B cell (primary cell): ENCODE measurements at regions of chr3 and their contacts with region 1.

Region 1: DNA sequence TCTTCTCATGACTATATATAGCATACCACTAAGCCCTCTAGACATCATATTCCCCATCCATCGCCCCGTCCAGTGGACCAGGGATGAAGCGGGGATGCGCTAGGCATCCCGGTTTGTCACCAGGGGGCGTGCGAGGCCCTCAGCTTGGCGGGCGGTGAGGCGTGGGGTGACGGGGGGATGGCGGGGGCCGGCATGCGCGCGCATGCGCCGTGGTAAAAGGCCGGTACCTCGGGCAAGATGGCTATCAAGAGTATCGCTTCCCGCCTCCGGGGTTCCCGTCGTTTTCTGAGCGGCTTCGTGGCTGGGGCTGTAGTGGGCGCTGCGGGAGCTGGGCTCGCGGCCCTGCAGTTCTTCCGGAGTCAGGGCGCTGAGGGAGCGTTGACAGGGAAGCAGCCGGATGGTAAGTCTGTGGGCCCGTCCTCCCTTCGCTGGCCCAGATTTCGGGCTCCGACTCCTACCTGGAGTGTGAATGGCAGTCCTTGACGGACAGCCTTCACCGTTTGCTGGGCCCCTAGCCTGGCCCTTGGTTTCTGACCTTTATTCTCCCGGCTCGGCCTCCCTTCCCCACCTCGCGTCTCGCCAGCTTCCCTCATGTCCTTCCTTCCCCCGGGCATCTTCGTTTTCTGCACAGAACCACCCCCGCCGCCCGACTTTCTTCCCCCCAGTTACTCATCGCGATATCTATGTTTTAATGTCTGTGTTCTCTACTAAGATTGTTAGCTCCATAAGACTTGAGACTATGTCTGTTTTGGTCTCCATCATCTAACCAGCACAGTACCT is at the start of gene EXOG:
- DNase-seq: peak; percentile 95
- ATAC-seq: peak; percentile 96
- H3K4me3 ChIP-seq: peak within 1 kb of the TSS; percentile 79 to 95 (median 90)
- H3K4me3 Mint-ChIP-seq: peak within 1 kb of the TSS; percentile 95
- H3K27ac ChIP-seq: peak within 1 kb of the TSS; percentile 59 to 81
- H3K27ac Mint-ChIP-seq: peak within 1 kb of the TSS; percentile 83
- H3K4me1 ChIP-seq: peaks cover 6 to 12% of the 10 kb centered on the region in 2 donors
- H3K4me1 Mint-ChIP-seq: peaks cover 19% of the 10 kb centered on the region
- H3K27me3 ChIP-seq: no peaks in the 10 kb centered on the region
- H3K27me3 Mint-ChIP-seq: no peaks in the 10 kb centered on the region
- CTCF ChIP-seq: peak; percentile 92
- total RNA-seq, gene EXOG: 36.8 and 38.3 TPM in 2 replicates

Region 2: DNA sequence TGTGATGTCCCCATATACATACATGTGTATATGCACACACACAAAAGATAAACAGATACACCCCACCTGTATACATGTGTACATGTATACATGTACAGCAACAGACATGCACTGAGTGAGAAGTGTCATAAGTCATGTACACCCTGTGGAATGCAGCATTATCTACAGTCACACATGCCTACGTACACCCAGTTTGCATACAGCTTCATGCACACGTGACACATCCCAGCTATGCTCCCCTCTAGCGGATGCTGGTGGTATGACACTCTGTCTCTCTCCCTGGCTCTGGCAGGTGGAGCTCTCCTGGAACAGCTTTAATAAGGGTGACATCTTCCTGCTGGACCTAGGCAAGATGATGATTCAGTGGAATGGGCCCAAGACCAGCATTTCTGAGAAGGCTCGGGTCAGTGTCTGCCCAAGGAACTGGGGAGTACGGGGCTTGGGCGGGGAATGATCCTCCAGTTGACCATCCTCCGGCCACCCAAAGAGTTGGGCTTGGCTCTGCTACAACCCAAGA is 499.5 kb before region 1 on chr3:
- CTCF ChIA-PET with region 1: no interaction called
- POLR2A ChIA-PET with region 1: interaction called, 12 read pairs
- intact Hi-C with region 1: loop called (anchors 2 kb)
- DNase-seq: peak; percentile 85
- ATAC-seq: peak; percentile 68
- H3K4me3 ChIP-seq: no peak overlapping the region
- H3K4me3 Mint-ChIP-seq: peak overlapping the region; percentile 77
- H3K27ac ChIP-seq: no peak overlapping the region
- H3K27ac Mint-ChIP-seq: peak overlapping the region; percentile 93
- H3K4me1 ChIP-seq: peaks cover 27 to 44% of the 10 kb centered on the region in 2 donors
- H3K4me1 Mint-ChIP-seq: peaks cover 51% of the 10 kb centered on the region
- H3K27me3 ChIP-seq: no peaks in the 10 kb centered on the region
- H3K27me3 Mint-ChIP-seq: no peaks in the 10 kb centered on the region
- CTCF ChIP-seq: peak; percentile 88

Region 3: DNA sequence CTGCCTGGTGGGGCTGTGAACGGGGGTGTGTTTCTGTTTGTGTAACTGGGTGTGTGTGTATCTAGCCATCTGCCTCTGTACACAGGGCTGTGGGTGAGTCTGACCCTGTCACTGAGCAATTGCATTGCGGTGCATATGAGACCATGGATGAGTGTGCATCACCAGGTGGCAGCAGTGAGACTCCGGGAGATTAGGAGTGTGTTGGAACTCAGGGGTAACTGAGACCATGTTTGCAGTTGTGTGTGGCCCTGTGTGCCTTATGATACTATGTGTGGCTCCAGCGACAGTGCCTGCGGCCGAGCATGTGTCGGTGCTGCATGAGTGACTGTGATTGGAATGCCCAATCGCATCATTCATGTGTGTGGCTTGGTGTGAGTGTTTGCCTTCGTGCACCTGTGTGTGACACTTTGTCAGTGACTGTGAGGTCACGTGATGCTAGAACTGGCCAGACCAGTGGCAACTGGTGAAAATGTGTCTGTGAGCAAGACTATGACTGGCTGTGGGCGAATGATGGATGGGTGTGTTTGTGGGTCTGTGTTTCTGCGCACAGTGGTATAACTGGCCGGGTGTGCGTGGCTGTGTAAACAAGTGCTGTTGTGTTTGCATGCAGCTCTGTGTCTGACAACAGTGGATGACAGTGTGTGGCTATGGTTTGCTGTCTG is 491.8 kb before region 1 on chr3:
- CTCF ChIA-PET with region 1: no interaction called
- POLR2A ChIA-PET with region 1: interaction called, 12 read pairs
- intact Hi-C with region 1: no loop called
- DNase-seq: peak; percentile 55
- ATAC-seq: peak; percentile 47
- H3K4me3 ChIP-seq: no peak overlapping the region
- H3K4me3 Mint-ChIP-seq: no peak overlapping the region
- H3K27ac ChIP-seq: no peak overlapping the region
- H3K27ac Mint-ChIP-seq: peak overlapping the region; percentile 29
- H3K4me1 ChIP-seq: peaks cover 0 to under 1% of the 10 kb centered on the region in 2 donors
- H3K4me1 Mint-ChIP-seq: peaks cover 12% of the 10 kb centered on the region
- H3K27me3 ChIP-seq: no peaks in the 10 kb centered on the region
- H3K27me3 Mint-ChIP-seq: no peaks in the 10 kb centered on the region
- CTCF ChIP-seq: peak; percentile 50

Region 4: GRCh38 chr3:38016847-38017441 is 479.4 kb before region 1 on chr3:
- CTCF ChIA-PET with region 1: no interaction called
- POLR2A ChIA-PET with region 1: no interaction called
- intact Hi-C with region 1: no loop called
- DNase-seq: no peak
- ATAC-seq: no peak
- H3K4me3 ChIP-seq: no peak overlapping the region
- H3K4me3 Mint-ChIP-seq: no peak overlapping the region
- H3K27ac ChIP-seq: no peak overlapping the region
- H3K27ac Mint-ChIP-seq: no peak overlapping the region
- H3K4me1 ChIP-seq: no peaks in the 10 kb centered on the region
- H3K4me1 Mint-ChIP-seq: no peaks in the 10 kb centered on the region
- H3K27me3 ChIP-seq: no peaks in the 10 kb centered on the region
- H3K27me3 Mint-ChIP-seq: no peaks in the 10 kb centered on the region
- CTCF ChIP-seq: no peak

Region 5: DNA sequence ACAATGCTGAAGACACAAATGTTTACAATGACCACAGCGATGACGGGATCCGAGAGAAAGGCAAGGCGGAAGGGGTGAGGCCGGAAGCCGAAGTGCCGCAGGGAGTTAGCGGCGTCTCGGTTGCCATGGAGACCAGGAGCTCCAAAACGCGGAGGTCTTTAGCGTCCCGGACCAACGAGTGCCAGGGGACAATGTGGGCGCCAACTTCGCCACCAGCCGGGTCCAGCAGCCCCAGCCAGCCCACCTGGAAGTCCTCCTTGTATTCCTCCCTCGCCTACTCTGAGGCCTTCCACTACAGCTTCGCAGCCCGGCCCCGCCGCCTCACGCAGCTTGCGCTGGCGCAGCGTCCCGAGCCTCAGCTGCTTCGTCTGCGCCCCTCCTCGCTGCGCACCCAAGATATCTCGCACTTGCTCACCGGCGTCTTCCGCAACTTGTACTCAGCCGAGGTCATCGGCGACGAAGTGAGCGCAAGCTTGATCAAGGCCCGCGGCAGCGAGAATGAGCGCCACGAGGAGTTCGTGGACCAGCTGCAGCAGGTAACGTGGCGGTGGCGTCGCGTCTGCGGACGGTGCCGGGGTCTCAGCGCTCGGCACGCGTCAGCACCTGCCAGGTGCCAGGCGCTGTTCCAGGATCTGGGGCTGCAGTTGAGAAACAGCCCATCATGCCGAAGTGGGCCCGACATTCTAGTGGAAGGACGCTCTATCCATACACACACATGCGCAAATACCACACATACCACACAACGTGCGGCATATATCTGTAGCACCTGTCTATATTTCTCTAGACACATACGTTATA is 457.0 kb before region 1 on chr3 and contains the start of gene DLEC1:
- CTCF ChIA-PET with region 1: no interaction called
- POLR2A ChIA-PET with region 1: no interaction called
- intact Hi-C with region 1: loop called (anchors 5 kb)
- DNase-seq: peak; percentile 86
- ATAC-seq: peak; percentile 65
- H3K4me3 ChIP-seq: peak within 1 kb of the TSS; percentile 64 to 71 (median 69)
- H3K4me3 Mint-ChIP-seq: peak within 1 kb of the TSS; percentile 93
- H3K27ac ChIP-seq: peak within 1 kb of the TSS; percentile 18 to 46
- H3K27ac Mint-ChIP-seq: peak within 1 kb of the TSS; percentile 54
- H3K4me1 ChIP-seq: peaks cover 12 to 22% of the 10 kb centered on the region in 2 donors
- H3K4me1 Mint-ChIP-seq: peaks cover 19% of the 10 kb centered on the region
- H3K27me3 ChIP-seq: peaks cover 0 to 4% (median 1%) of the 10 kb centered on the region in 4 experiments
- H3K27me3 Mint-ChIP-seq: peaks cover 9% of the 10 kb centered on the region
- CTCF ChIP-seq: no peak
- total RNA-seq, gene DLEC1: 0.83 and 2.1 TPM in 2 replicates

Region 6: DNA sequence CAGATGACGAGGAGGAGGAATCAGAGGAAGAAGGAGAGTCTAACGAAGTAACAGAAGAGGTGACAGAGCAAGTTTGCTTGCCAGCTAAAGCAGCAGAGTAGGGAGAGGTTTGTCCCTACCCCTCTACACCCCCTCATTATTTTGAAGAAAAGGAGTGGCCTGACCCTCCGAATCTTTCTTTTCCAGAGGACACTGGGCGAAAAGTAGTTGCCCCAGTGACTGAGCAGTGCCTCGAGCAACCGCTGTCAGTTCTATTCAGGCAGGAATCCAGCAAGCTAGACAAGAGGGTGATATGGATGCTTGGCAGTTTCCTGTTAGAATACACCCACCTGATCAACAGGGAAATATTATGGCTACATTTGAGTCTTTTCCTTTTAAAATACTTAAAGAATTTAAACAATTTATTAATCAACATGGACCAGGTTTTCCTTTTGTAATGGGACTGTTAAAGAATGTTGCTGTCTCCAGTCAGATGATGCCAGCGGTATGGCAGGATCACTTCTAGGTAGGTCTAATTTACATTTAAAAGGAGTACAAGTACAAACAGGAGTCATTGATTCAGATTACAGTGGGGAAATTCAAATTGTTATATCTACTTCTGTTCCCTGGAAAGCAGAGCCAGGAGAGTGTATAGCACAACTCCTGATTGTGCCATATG is 74.5 kb before region 1 on chr3:
- CTCF ChIA-PET with region 1: no interaction called
- POLR2A ChIA-PET with region 1: no interaction called
- intact Hi-C with region 1: no loop called
- DNase-seq: no peak
- ATAC-seq: no peak
- H3K4me3 ChIP-seq: no peak overlapping the region
- H3K4me3 Mint-ChIP-seq: no peak overlapping the region
- H3K27ac ChIP-seq: no peak overlapping the region
- H3K27ac Mint-ChIP-seq: no peak overlapping the region
- H3K4me1 ChIP-seq: no peaks in the 10 kb centered on the region
- H3K4me1 Mint-ChIP-seq: no peaks in the 10 kb centered on the region
- H3K27me3 ChIP-seq: no peaks in the 10 kb centered on the region
- H3K27me3 Mint-ChIP-seq: peaks cover 7% of the 10 kb centered on the region
- CTCF ChIP-seq: no peak

Region 7: GRCh38 chr3:38453075-38453912 is 43.0 kb before region 1 on chr3 and contains the start of gene ACVR2B:
- CTCF ChIA-PET with region 1: interaction called, 4 read pairs
- POLR2A ChIA-PET with region 1: no interaction called
- intact Hi-C with region 1: loop called (anchors 1 kb)
- DNase-seq: peak; percentile 51
- ATAC-seq: peak; percentile 81
- H3K4me3 ChIP-seq: peak within 1 kb of the TSS; percentile 40 to 63 (median 55)
- H3K4me3 Mint-ChIP-seq: peak within 1 kb of the TSS; percentile 90
- H3K27ac ChIP-seq: no peak within 1 kb of the TSS
- H3K27ac Mint-ChIP-seq: peak within 1 kb of the TSS; percentile 32
- H3K4me1 ChIP-seq: peaks cover 13 to 24% of the 10 kb centered on the region in 2 donors
- H3K4me1 Mint-ChIP-seq: peaks cover 15% of the 10 kb centered on the region
- H3K27me3 ChIP-seq: peaks cover 0 to 33% (median 8%) of the 10 kb centered on the region in 4 experiments
- H3K27me3 Mint-ChIP-seq: peaks cover 31% of the 10 kb centered on the region
- CTCF ChIP-seq: no peak
- total RNA-seq, gene ACVR2B: 3.9 and 4.2 TPM in 2 replicates